ENCODE measurements at regions of chr11 and their contacts with region 1.

Region 1: GRCh38 chr11:65833297-65834030 is at the start of gene SNX32:
- DNase-seq: peak; percentile 100
- CTCF ChIP-seq: no peak

Region 2: DNA sequence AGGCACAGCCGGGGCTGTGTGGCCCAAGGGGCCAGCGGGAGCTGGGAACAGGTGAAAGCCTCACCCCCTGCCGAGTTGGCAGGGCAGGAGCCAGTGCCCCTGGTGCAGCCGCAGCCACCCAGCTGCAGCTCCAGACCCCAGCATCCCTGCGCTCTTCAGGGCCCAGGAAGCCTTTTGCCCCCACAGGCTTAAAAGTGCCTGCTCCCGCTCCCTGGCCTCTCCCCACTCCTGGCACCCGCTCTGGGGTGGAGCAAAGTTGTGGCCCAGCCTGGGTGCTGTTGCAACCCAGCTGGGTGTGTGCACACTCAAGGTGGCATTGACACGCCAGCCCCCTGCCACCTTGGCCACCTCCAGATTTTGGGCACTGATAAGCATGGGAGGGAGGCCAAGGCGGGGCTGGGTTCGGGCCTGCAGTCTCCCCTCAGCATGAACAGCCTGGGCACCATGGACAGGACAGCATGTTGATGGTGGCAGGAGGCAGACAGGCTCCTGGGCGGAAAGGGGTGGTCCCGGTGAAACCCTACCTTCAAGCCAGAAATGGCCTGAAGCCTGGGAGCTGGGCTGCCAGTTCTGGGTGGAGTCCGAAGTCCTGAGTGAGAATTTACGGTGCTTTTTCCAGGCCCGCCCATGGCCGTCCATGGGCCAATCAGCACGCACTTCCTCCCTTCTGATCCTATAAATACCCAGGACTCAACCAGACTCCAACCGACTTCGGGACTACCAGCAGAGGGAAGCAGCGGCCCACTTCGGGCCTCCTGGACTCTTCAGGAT is 89.4 kb before region 1 on chr11:
- CTCF ChIA-PET with region 1: no interaction called
- POLR2A ChIA-PET with region 1: no interaction called
- DNase-seq: no peak
- CTCF ChIP-seq: no peak

Region 3: GRCh38 chr11:65850831-65851811 is 17.7 kb after region 1 on chr11:
- CTCF ChIA-PET with region 1: interaction called, 15 read pairs
- POLR2A ChIA-PET with region 1: interaction called, 7 read pairs
- DNase-seq: no peak
- CTCF ChIP-seq: no peak

Measured in GM10248 (cell line).